Psoas muscle (tissue), 8 donors: ENCODE measurements at regions of chr2 and their contacts with region 1.

Region 1: DNA sequence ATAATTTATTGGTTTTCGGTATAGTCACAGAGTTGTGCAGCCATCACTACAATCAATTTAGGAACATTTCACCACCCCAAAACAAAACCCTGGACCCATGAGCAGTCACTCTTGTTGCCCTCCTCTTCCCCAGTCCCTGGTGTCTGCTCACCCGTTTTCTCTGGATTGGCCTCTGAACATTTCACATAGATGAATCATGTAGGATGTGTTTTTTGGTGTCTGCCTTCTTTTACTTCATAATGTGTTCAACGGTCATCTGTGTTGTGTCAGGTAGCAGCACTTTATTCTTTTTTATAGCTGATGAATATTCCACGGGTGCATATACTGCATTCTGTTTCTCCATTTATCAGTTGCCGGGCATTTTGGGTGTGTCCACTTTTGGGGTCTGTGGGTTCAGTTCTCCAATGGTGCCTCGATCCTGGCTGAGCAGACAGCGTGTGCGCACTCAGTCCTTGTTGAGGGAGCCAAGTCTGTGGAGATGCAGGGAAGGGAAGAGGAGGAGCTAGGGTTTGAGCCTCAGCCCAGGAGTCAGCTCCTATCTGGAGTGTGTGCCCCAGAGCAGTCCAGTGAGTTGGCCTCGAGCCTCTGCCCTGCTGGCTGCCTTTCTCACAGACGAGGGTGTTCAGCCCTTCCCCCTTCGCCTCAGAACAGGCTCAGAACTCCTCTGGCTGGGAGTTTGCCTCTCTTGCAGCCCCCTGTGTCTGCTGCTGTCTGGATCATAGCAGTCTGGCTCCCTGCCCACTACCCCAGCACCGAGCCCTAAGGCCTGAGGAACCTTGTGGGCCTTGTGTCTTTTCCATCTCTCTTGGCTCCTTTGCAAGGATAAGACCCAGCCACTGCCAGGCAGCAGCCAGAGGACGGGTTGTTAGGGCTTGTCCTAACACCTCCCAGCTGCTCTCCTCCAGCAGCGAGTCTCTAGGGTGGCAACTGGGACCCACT is 18.0 kb downstream of the C2orf74 start:
- DNase-seq: peak; percentile 62 to 72
- ATAC-seq: peak in 2 of 4 donors; percentile 10 to 17
- H3K4me3 ChIP-seq: peak overlapping the region; percentile 88
- H3K27ac ChIP-seq: peak overlapping the region; percentile 99
- H3K4me1 ChIP-seq: peaks cover 27% of the 10 kb centered on the region
- H3K27me3 ChIP-seq: no peaks in the 10 kb centered on the region
- CTCF ChIP-seq: no peak

Region 2: GRCh38 chr2:61016808-61017555 is 163.0 kb before region 1 on chr2:
- intact Hi-C with region 1: loop called in 1 of 2 experiments (anchors 5 kb)
- DNase-seq: peak; percentile 56 to 78
- ATAC-seq: peak; percentile 88 to 92 (median 92)
- H3K4me3 ChIP-seq: peak overlapping the region; percentile 94
- H3K27ac ChIP-seq: peak overlapping the region; percentile 94
- H3K4me1 ChIP-seq: peaks cover 27% of the 10 kb centered on the region
- H3K27me3 ChIP-seq: no peaks in the 10 kb centered on the region
- CTCF ChIP-seq: no peak

Region 3: DNA sequence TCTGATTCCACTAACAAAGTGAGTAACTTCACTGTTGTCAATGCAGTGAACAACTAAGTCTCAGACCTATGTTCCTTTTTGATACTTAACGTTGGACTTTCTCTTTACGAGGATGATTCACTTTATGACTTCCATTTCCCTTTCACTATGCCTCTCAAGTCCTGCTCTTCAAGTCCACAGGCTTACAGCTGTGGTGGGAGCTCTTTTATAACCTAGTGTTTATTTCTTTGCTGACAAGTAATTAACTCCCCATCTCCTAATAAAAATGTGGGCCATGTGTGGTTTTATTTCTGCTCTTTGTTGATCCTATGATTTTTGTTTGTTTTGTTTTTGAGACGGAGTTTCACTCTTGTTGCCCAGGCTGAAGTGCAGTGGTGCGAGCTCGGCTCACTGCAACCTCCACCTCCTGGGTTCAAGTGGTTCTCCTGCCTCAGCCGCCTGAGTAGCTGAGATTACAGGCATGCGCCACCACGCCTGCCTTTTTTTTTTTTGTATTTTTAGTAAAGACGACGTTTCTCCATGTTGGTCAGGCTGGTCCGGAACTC is 148.8 kb after region 1 on chr2:
- intact Hi-C with region 1: no loop called
- DNase-seq: no peak
- ATAC-seq: no peak
- H3K4me3 ChIP-seq: no peak overlapping the region
- H3K27ac ChIP-seq: no peak overlapping the region
- H3K4me1 ChIP-seq: no peaks in the 10 kb centered on the region
- H3K27me3 ChIP-seq: no peaks in the 10 kb centered on the region
- CTCF ChIP-seq: no peak